Esophagus squamous epithelium (tissue), 5 donors: ENCODE measurements at regions of chr1 and their contacts with region 1.

Region 1: DNA sequence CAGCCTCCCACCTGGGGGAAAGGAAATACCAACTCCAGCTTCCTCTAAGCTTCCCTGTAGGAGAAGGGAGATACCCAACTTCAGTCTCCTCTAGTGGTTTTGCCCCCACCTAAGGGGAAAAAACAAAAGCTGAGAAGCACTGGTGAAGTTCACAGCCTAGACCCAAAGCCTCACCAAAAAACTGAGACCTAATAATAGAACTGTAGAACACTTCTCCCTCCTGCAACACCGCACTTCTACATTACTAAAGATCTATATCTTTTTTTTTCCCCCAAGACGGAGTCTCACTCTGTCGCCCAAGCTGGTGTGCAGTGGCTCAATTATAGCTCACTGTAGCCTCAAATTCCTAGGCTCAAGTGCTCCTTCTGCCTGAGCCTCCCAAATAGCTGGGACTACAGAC is 43.2 kb downstream of the SLC2A1 start:
- DNase-seq: no peak
- H3K4me3 ChIP-seq: no peak overlapping the region
- H3K27ac ChIP-seq: no peak overlapping the region
- H3K4me1 ChIP-seq: peaks cover 0 to 9% (median 8%) of the 10 kb centered on the region in 3 donors
- H3K27me3 ChIP-seq: peaks cover 0 to 4% (median 0%) of the 10 kb centered on the region in 4 donors
- CTCF ChIP-seq: no peak
- POLR2A ChIP-seq: no peak

Region 2: GRCh38 chr1:42766741-42767509 is 148.5 kb before region 1 on chr1 and contains the starts of genes C1orf50 and P3H1:
- intact Hi-C with region 1: no loop called
- DNase-seq: peak; percentile 96
- H3K4me3 ChIP-seq: peak within 1 kb of the TSS; percentile 63 to 97 (median 86)
- H3K27ac ChIP-seq: peak within 1 kb of the TSS; percentile 86 to 94 (median 93)
- H3K4me1 ChIP-seq: peaks cover 10 to 62% (median 16%) of the 10 kb centered on the region in 3 donors
- H3K27me3 ChIP-seq: no peaks in the 10 kb centered on the region
- CTCF ChIP-seq: peak in 1 of 6 experiments; percentile 29
- POLR2A ChIP-seq: peak in 3 of 4 donors; percentile 95 to 99 (median 98)
- total RNA-seq, gene C1orf50: 1.5 to 15.4 (median 3.8) TPM
- total RNA-seq, gene P3H1: 5.5 to 12.4 (median 7.2) TPM

Region 3: DNA sequence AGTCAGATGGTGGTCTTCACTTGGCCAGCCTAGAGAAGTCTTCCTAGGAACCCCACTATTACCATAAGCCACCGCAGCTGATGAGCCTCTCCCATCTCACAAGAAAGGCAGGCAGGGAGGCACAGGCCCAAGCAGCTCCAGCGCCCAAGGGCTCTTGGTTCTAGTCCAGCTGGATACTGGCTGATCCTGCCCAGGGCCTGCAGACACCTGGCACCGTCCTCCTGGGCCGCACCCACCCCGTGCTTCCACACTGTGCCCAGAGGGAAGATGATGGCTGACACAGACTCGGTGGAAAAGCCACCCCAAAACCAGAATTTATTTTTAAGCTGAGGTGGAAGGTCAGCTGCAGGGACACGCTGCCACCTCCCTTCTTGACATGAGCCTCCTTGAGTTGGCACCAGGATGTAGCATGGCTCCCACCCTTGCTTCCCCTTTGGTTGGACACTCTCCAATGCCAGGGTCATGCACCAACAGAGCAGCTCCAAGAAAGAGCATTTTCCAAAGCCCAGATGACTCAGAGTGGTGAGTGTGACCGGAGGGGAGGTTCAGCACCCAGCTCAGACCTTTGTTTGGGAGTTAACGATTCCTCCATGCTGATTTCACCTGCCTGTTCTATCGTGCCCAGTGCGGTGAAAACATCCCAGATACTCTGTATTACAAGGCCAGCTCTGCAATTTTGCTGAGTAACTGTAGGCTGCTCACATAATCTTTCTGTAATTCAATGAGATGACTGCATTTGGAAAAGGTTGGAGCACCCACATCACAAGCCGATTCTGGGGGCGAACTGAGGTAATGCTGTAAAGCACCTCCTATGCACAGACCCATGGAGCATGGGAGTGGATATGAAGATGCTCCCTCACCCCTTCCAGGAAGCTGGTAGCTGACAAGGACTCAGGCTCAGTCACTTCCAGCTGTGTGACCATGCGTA is 106.4 kb after region 1 on chr1:
- intact Hi-C with region 1: no loop called
- DNase-seq: no peak
- H3K4me3 ChIP-seq: no peak overlapping the region
- H3K27ac ChIP-seq: peak overlapping the region; percentile 75 to 87 (median 81)
- H3K4me1 ChIP-seq: peaks cover 9 to 59% (median 15%) of the 10 kb centered on the region in 3 donors
- H3K27me3 ChIP-seq: no peaks in the 10 kb centered on the region
- CTCF ChIP-seq: no peak
- POLR2A ChIP-seq: peak in 1 of 4 donors; percentile 10

Region 4: GRCh38 chr1:43073490-43074230 is 158.2 kb after region 1 on chr1:
- intact Hi-C with region 1: loop called (anchors 5 kb)
- DNase-seq: no peak
- H3K4me3 ChIP-seq: no peak overlapping the region
- H3K27ac ChIP-seq: peak overlapping the region in 1 of 4 donors; percentile 14
- H3K4me1 ChIP-seq: peaks cover 13 to 34% (median 14%) of the 10 kb centered on the region in 3 donors
- H3K27me3 ChIP-seq: no peaks in the 10 kb centered on the region
- CTCF ChIP-seq: peak; percentile 73 to 94 (median 90)
- POLR2A ChIP-seq: no peak

Region 5: GRCh38 chr1:43199064-43199726 is 283.7 kb after region 1 on chr1:
- intact Hi-C with region 1: no loop called
- DNase-seq: no peak
- H3K4me3 ChIP-seq: no peak overlapping the region
- H3K27ac ChIP-seq: no peak overlapping the region
- H3K4me1 ChIP-seq: no peaks in the 10 kb centered on the region
- H3K27me3 ChIP-seq: peaks cover 0 to 11% (median 0%) of the 10 kb centered on the region in 4 donors
- CTCF ChIP-seq: no peak
- POLR2A ChIP-seq: no peak